GM12878 (cell line): ENCODE measurements at regions of chr13 and their contacts with region 1.

Region 1: GRCh38 chr13:51645154-51645650 is 60.9 kb downstream of the WDFY2 start:
- DNase-seq: no peak
- ATAC-seq: peak; percentile 85
- H3K4me3 ChIP-seq: no peak overlapping the region; the same call in 1 of the 2 replicates
- H3K27ac ChIP-seq: no peak overlapping the region; the same call in 1 of the 2 replicates
- H3K4me1 ChIP-seq: peaks cover 12% of the 10 kb centered on the region
- H3K27me3 ChIP-seq: no peaks in the 10 kb centered on the region
- CTCF ChIP-seq: no peak
- EP300 ChIP-seq: no peak
- POLR2A ChIP-seq: no peak
- RAD21 ChIP-seq: no peak

Region 2: DNA sequence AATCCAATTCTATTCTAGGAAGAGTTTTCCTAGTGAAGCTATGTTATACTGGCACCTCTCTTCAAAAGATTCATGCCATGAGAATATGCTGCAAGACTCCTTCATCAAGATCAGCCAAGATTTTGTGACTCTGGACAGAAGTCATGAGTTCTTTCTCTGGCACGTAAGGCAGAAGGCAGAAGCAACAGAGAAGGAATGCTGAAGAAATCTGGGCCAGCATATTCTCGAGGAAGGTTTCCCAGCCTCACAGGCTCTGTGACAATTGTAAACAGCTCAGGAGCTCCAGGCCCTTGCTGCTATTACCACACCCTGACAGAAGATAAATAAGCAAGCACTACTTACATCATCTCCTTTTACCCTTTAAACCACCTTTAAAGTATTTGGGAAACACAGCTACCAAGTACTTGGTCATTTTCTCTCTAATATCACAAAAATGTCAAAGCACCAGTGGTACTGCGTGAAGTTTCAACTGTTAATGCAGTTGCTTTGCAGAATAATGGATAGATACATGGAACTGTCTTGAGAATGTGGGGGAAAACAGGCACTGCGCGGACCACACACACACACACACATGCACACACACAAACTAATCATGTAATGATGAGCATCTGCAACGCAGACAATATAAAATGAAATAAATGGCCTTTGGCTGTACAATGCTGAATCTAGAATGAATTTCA is 247.8 kb before region 1 on chr13:
- CTCF ChIA-PET with region 1: no interaction called
- POLR2A ChIA-PET with region 1: no interaction called
- RAD21 ChIA-PET with region 1: no interaction called
- SMC1A ChIA-PET with region 1: no interaction called
- in situ Hi-C with region 1: no loop called
- intact Hi-C with region 1: no loop called
- DNase-seq: no peak
- ATAC-seq: peak; percentile 42; the same call in 2 of the 3 replicates
- H3K4me3 ChIP-seq: no peak overlapping the region
- H3K27ac ChIP-seq: no peak overlapping the region
- H3K4me1 ChIP-seq: no peaks in the 10 kb centered on the region; the same call in 1 of the 2 replicates
- H3K27me3 ChIP-seq: no peaks in the 10 kb centered on the region
- CTCF ChIP-seq: no peak
- EP300 ChIP-seq: no peak
- POLR2A ChIP-seq: no peak
- RAD21 ChIP-seq: no peak

Region 3: GRCh38 chr13:51632591-51633362 is 12.4 kb before region 1 on chr13:
- CTCF ChIA-PET with region 1: interaction called, 5 read pairs
- POLR2A ChIA-PET with region 1: no interaction called
- RAD21 ChIA-PET with region 1: interaction called, 3 read pairs
- SMC1A ChIA-PET with region 1: interaction called, 12 read pairs
- in situ Hi-C with region 1: no loop called
- intact Hi-C with region 1: no loop called
- DNase-seq: no peak
- ATAC-seq: peak; percentile 66
- H3K4me3 ChIP-seq: 0 out of 2 replicates have a peak overlapping the region, but pooled peaks have one; percentile 35
- H3K27ac ChIP-seq: no peak overlapping the region
- H3K4me1 ChIP-seq: peaks cover 4% of the 10 kb centered on the region; the same call in 1 of the 2 replicates
- H3K27me3 ChIP-seq: no peaks in the 10 kb centered on the region
- CTCF ChIP-seq: no peak
- EP300 ChIP-seq: no peak
- POLR2A ChIP-seq: no peak
- RAD21 ChIP-seq: no peak

Region 4: GRCh38 chr13:51714663-51715168 is 69.5 kb after region 1 on chr13:
- CTCF ChIA-PET with region 1: no interaction called
- POLR2A ChIA-PET with region 1: no interaction called
- RAD21 ChIA-PET with region 1: no interaction called
- SMC1A ChIA-PET with region 1: no interaction called
- in situ Hi-C with region 1: no loop called
- intact Hi-C with region 1: no loop called
- DNase-seq: peak; percentile 78
- ATAC-seq: peak; percentile 96
- H3K4me3 ChIP-seq: no peak overlapping the region
- H3K27ac ChIP-seq: peak overlapping the region; percentile 72
- H3K4me1 ChIP-seq: peaks cover 14% of the 10 kb centered on the region
- H3K27me3 ChIP-seq: no peaks in the 10 kb centered on the region
- CTCF ChIP-seq: no peak
- EP300 ChIP-seq: peak in 1 of 2 experiments; percentile 50; a peak in 1 of 4 replicates
- POLR2A ChIP-seq: no peak
- RAD21 ChIP-seq: no peak